BJ (cell line): ENCODE measurements at regions of chr17 and their contacts with region 1.

Region 1: DNA sequence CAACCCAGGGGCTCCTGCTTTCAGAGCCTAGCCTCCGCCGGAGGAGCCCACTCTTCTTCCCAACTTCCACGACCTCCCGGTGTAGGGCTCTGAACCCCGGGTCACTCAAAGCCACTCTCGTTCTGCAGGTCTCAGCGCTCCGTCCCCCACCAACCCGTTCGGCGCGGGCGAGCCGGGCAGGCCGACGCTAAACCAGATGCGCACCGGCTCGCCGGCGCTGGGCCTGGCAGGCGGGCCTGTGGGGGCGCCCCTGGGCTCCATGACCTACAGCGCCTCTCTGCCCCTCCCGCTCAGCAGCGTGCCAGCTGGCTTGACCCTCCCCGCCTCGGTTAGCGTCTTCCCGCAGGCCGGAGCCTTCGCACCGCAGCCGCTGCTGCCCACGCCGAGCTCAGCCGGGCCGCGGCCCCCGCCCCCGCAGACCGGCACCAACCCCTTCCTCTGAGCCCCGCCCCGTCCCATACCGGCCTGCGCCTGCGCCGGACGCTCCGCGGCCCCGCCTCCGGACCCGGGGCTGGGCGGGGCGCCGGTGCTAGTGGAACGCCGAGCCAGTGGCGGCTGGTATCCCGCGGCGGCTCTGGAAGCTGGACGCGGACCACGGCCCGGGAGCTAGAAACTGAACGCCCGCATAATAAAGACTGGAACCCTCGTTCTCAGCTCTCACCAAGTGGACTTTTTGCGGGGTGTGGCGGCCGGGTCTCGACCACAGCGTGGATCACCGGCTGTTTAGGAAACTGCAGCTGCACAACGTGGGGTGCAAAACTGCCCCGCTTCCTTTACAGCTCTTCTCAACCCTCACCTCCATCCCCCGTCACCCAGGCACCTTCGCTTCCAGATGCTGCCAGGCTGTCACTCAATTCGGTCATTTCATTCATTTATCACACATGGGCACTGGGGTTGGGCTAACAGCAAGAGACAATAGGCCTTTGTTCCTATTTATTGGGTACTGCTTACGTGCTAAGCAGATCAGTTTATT is 5.0 kb upstream of the SPATA20 start:
- DNase-seq: peak; percentile 15
- H3K4me3 ChIP-seq: peak overlapping the region; percentile 59
- H3K27me3 ChIP-seq: no peaks in the 10 kb centered on the region
- CTCF ChIP-seq: peak; percentile 16; the same call in 1 of the 2 replicates

Region 2: GRCh38 chr17:50699410-50700074 is 157.5 kb after region 1 on chr17:
- CTCF ChIA-PET with region 1: interaction called, 25 read pairs
- POLR2A ChIA-PET with region 1: no interaction called
- DNase-seq: no peak
- H3K4me3 ChIP-seq: no peak overlapping the region
- H3K27me3 ChIP-seq: no peaks in the 10 kb centered on the region
- CTCF ChIP-seq: no peak